ENCODE measurements at regions of chr6 and their contacts with region 1.

Region 1: DNA sequence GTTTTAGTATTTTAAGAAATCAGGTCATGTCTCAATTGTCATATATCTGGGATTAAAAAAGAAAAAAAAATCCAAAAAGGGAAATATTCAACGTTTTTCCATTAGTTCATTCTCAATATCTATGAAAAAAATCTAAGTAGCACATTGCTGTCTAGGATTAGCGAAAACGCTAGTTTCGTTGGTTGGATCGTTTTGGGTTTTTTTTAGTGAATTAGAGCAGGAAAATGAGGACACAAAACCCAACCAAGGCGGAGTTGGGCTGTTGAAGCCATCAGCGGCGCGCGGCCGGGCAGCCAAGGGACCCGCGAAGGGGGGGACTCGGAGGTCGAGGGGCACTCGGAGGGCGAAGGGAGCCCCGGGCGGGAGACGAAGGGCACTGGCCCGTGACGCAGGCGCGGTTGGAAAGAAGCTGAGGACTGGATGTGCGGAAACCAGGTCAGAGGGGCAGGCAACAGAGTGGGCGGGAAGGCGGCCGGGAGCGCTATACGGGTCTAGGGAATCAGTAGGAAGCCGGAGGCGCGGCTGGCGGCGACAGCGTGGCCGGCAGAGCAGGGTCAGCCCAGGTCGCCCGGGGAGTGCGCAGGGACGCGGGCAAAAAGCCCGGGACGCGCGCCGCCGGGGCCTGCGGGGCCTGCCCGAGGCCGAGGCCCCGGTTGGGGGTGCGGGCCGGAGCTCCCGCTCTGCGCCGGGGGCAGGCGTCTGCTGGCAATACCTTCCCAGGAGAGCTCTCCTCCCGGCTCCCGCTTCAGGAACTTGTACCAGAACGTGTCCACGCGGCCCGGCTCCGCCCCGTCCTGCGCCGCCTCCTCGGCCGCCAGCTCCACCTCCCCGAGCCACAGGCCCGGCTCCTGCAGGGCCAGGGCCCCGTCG is 599 bp downstream of the EPM2A start:
- DNase-seq: peak; percentile 50 to 78 (median 64)
- ATAC-seq: peak; percentile 79
- H3K4me3 ChIP-seq: peak overlapping the region; percentile 65
- H3K4me3 Mint-ChIP-seq: peak overlapping the region; percentile 87 to 100 (median 98)
- H3K27ac ChIP-seq: peak overlapping the region; percentile 92
- H3K27ac Mint-ChIP-seq: peak overlapping the region; percentile 90 to 99 (median 97)
- H3K4me1 ChIP-seq: peaks cover 0 to 5% of the 10 kb centered on the region in 2 donors
- H3K4me1 Mint-ChIP-seq: peaks cover 0 to 29% (median 9%) of the 10 kb centered on the region in 7 donors
- H3K27me3 ChIP-seq: no peaks in the 10 kb centered on the region
- H3K27me3 Mint-ChIP-seq: no peaks in the 10 kb centered on the region

Region 2: DNA sequence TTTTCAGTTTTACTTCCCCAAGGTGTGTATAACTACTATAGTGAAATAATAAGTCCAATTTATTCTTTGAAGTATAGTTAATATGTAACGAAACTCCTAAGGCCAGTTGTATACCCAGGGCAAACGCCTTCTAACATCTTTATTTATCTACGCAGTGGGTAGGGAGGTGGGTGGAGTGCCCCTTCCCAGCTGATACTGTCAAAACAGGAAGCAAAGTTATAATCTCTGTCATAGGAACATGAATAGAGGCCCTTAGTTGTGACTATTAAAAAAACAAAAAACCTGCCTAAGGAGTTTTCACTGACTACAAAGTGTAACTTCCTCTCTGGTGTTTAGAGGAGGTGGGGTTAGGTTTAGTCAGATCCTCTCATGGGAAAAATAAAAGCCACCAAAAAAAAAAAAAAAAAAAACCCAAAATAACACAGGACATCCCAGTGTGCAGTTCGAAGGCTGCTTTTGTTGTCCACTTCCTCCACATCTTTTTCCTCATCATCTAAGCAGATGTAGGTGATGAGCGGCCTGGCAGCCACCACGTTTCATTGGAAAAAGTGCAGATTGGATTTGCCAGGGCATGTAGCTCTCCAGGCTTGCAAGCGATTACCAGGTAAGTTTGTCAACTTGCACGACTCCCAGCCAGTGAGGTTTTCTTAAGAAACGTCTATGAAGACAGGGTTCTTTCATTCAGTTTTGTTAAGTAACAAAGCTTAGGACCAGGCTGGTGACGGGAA is 1390.9 kb before region 1 on chr6:
- CTCF ChIA-PET with region 1: no interaction called
- POLR2A ChIA-PET with region 1: no interaction called
- intact Hi-C with region 1: loop called in 1 of 2 experiments (anchors 5 kb)
- DNase-seq: peak in 8 of 9 donors; percentile 37 to 85 (median 76)
- ATAC-seq: peak; percentile 88
- H3K4me3 ChIP-seq: peak overlapping the region; percentile 67
- H3K4me3 Mint-ChIP-seq: peak overlapping the region; percentile 80 to 99 (median 94)
- H3K27ac ChIP-seq: peak overlapping the region; percentile 75
- H3K27ac Mint-ChIP-seq: peak overlapping the region; percentile 87 to 99 (median 96)
- H3K4me1 ChIP-seq: peaks cover 58 to 62% of the 10 kb centered on the region in 2 donors
- H3K4me1 Mint-ChIP-seq: peaks cover 68 to 93% (median 84%) of the 10 kb centered on the region in 7 donors
- H3K27me3 ChIP-seq: no peaks in the 10 kb centered on the region
- H3K27me3 Mint-ChIP-seq: no peaks in the 10 kb centered on the region

Region 3: GRCh38 chr6:145814501-145815308 is 80.0 kb after region 1 on chr6 and contains the start of gene FBXO30:
- CTCF ChIA-PET with region 1: interaction called, 3 read pairs
- POLR2A ChIA-PET with region 1: interaction called, 46 read pairs
- intact Hi-C with region 1: loop called (anchors 1 kb)
- DNase-seq: peak; percentile 81 to 94 (median 88)
- ATAC-seq: peak; percentile 98
- H3K4me3 ChIP-seq: peak within 1 kb of the TSS; percentile 92
- H3K4me3 Mint-ChIP-seq: peak within 1 kb of the TSS; percentile 91 to 96 (median 94)
- H3K27ac ChIP-seq: peak within 1 kb of the TSS; percentile 80
- H3K27ac Mint-ChIP-seq: peak within 1 kb of the TSS; percentile 83 to 96 (median 95)
- H3K4me1 ChIP-seq: peaks cover 0 to 18% of the 10 kb centered on the region in 2 donors
- H3K4me1 Mint-ChIP-seq: peaks cover 25 to 50% (median 41%) of the 10 kb centered on the region in 7 donors
- H3K27me3 ChIP-seq: no peaks in the 10 kb centered on the region
- H3K27me3 Mint-ChIP-seq: peaks cover 0 to 3% (median 0%) of the 10 kb centered on the region in 5 donors
- total RNA-seq, gene FBXO30: 1.6 to 5.1 (median 4.8) TPM

Region 4: DNA sequence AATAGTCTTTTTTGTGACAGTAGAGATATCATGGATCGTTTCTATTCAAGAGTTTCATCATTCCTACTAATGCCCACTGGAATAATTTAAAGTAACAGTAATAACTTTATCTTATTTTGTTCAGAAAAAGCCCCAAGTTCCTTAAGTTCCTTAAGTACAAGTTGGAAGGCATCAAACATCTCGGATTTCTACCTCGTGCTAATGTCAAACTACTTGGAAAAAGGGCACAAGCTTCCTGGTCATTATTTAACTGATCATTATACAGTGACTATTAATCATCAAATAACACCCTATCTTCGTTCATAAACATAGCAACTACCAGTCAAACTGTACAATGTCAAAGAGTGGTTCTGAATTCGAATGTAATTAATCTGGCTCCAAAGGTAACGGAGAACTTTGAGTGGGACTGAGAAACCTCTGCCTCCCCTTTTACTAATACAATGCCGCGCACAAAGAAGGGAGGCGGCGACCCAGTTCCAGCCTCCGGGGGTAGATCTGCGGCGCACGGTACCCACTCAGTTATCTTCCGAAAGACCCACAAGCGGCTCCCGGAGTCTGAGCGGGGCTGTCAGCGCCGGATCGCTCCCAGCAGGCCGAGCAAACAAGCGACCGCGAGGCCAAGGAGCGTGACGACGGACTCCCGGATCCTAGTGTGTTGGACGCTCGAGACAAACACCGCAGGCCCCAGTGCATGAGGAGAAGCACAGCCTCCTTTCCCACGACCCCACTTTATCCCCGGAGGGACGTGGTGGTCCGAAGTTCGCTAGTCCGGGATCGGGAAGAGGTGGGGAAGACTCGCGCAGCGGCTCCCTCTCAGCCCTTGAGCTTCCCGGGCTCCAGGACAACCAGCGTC is 228.7 kb after region 1 on chr6:
- CTCF ChIA-PET with region 1: interaction called, 3 read pairs
- POLR2A ChIA-PET with region 1: interaction called, 32 read pairs
- intact Hi-C with region 1: loop called (anchors 1 kb)
- DNase-seq: peak in 6 of 9 donors; percentile 20 to 44 (median 30)
- ATAC-seq: peak; percentile 11
- H3K4me3 ChIP-seq: peak overlapping the region; percentile 88
- H3K4me3 Mint-ChIP-seq: peak overlapping the region; percentile 90 to 99 (median 98)
- H3K27ac ChIP-seq: peak overlapping the region; percentile 84
- H3K27ac Mint-ChIP-seq: peak overlapping the region; percentile 91 to 100 (median 98)
- H3K4me1 ChIP-seq: peaks cover 20 to 26% of the 10 kb centered on the region in 2 donors
- H3K4me1 Mint-ChIP-seq: peaks cover 30 to 72% (median 56%) of the 10 kb centered on the region in 7 donors
- H3K27me3 ChIP-seq: no peaks in the 10 kb centered on the region
- H3K27me3 Mint-ChIP-seq: no peaks in the 10 kb centered on the region

Measured in naive thymus-derived CD4-positive, alpha-beta T cell (primary cell).